Colonic mucosa (tissue), 4 donors: ENCODE measurements at regions of chr2 and their contacts with region 1.

Region 1: GRCh38 chr2:64330281-64331113 is 123.5 kb upstream of the LGALSL start:
- DNase-seq: peak; percentile 85
- H3K4me3 ChIP-seq: peak overlapping the region; percentile 3
- H3K27ac ChIP-seq: peak overlapping the region; percentile 71
- H3K4me1 ChIP-seq: peaks cover 3% of the 10 kb centered on the region
- H3K27me3 ChIP-seq: no peaks in the 10 kb centered on the region
- CTCF ChIP-seq: peak; percentile 88

Region 2: GRCh38 chr2:64283641-64284361 is 46.7 kb before region 1 on chr2:
- intact Hi-C with region 1: no loop called
- DNase-seq: no peak
- H3K4me3 ChIP-seq: no peak overlapping the region
- H3K27ac ChIP-seq: peak overlapping the region; percentile 2
- H3K4me1 ChIP-seq: no peaks in the 10 kb centered on the region
- H3K27me3 ChIP-seq: no peaks in the 10 kb centered on the region
- CTCF ChIP-seq: no peak

Region 3: DNA sequence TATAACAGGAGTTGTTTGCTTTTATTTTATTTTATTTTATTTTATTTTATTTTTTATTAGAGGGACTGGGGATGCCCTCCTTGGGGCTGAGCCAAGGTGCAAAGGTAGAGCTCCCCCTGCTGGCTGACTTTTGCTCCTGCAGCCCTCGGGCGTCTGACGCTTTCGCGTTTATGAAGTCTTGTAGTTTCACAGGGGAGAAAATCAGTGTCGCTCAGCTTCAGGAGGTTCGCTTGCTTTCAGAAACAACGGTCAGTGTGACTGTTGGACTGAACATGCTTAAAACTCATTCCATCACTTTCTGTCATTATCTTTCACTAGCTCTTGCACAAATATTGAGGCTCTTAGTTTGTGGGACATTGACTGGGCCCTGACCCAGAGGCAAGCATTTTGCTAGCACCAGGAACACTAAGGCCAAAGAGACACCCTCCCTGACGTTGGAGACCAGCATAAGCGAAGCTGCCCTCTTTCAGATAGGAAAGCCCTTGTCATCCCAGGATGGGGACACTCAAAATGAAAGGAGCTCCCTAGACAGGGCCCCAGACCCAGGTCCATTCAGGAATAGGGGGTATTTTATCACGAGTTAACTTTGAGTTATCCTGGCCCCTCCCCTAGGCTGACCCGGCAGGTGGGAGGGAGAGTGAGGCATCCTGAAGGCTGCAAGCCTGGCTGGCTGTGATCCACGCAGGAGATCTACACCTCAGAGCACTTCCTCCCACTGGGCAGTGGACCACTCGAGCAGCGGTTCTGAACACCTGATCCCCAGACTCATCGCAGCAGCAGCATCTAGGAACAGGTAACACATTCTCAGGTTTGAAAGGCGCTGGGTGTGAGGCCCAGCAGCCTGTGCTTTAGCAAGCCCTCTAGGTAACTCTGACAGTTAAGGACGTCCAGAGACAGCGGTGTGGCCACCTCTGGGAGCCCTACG is 157.8 kb after region 1 on chr2:
- intact Hi-C with region 1: loop called (anchors 2 kb)
- DNase-seq: peak; percentile 84
- H3K4me3 ChIP-seq: no peak overlapping the region
- H3K27ac ChIP-seq: no peak overlapping the region
- H3K4me1 ChIP-seq: no peaks in the 10 kb centered on the region
- H3K27me3 ChIP-seq: no peaks in the 10 kb centered on the region
- CTCF ChIP-seq: peak; percentile 99